Activated CD8-positive, alpha-beta T cell treated with anti-CD3 and anti-CD28 coated beads, Interleukin-2, amount 10 ng/mL, durations not matched to agents 7 days and 5 days (primary cell): ENCODE measurements at regions of chr15 and their contacts with region 1.

Region 1: GRCh38 chr15:75453703-75454470 is 2.4 kb upstream of the SIN3A start:
- DNase-seq: peak; percentile 99
- ATAC-seq: peak; percentile 43
- H3K4me3 Mint-ChIP-seq: peak overlapping the region; percentile 84
- H3K27ac Mint-ChIP-seq: peak overlapping the region; percentile 98
- H3K4me1 Mint-ChIP-seq: peaks cover 26% of the 10 kb centered on the region
- H3K27me3 Mint-ChIP-seq: no peaks in the 10 kb centered on the region

Region 2: DNA sequence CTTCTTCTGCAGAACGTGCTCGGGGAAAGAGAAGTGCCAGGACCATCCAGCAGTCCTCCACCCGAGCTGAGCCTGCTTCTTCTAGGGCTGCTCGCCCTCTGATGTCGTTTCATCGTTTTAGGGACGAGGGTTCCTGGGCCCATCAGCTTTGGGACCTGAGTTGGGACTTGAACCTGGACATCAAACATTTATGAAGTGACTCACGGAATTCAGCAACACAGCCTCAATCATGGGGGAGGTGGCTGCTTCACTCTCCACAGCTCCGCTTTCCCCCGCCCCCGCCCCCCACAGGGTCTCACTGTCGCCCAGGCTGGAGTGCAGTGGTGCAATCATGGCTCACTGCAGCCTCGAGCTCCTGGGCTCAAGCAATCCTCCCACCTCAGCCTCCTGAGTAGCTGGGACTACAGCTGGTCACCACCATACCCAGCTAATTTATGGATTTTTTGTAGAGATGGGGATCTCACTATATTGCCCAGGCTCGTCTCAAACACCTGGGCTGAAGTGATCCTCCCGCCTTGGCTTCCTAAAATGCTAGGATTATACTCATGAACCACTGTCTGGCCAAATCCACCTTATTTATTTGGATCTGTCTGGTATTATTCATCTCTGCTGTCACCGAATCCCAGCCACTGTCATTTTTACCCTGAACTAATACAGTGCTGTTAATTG is 580.0 kb before region 1 on chr15:
- CTCF ChIA-PET with region 1: no interaction called
- POLR2A ChIA-PET with region 1: no interaction called
- DNase-seq: peak; percentile 52
- ATAC-seq: peak; percentile 4
- H3K4me3 Mint-ChIP-seq: peak overlapping the region; percentile 99
- H3K27ac Mint-ChIP-seq: peak overlapping the region; percentile 94
- H3K4me1 Mint-ChIP-seq: peaks cover 37% of the 10 kb centered on the region
- H3K27me3 Mint-ChIP-seq: peaks cover 6% of the 10 kb centered on the region

Region 3: GRCh38 chr15:75367913-75368688 is 85.8 kb before region 1 on chr15 and contains the start of gene MAN2C1:
- CTCF ChIA-PET with region 1: interaction called, 62 read pairs
- POLR2A ChIA-PET with region 1: interaction called, 69 read pairs
- DNase-seq: peak; percentile 94
- ATAC-seq: peak; percentile 94
- H3K4me3 Mint-ChIP-seq: peak within 1 kb of the TSS; percentile 89
- H3K27ac Mint-ChIP-seq: peak within 1 kb of the TSS; percentile 94
- H3K4me1 Mint-ChIP-seq: peaks cover 29% of the 10 kb centered on the region
- H3K27me3 Mint-ChIP-seq: no peaks in the 10 kb centered on the region
- total RNA-seq, gene MAN2C1: 123 to 131 TPM

Region 4: GRCh38 chr15:75508840-75509532 is 55.1 kb after region 1 on chr15:
- CTCF ChIA-PET with region 1: interaction called, 15 read pairs
- POLR2A ChIA-PET with region 1: interaction called, 4 read pairs
- DNase-seq: peak; percentile 47
- ATAC-seq: peak; percentile 42
- H3K4me3 Mint-ChIP-seq: no peak overlapping the region
- H3K27ac Mint-ChIP-seq: peak overlapping the region; percentile 8
- H3K4me1 Mint-ChIP-seq: no peaks in the 10 kb centered on the region
- H3K27me3 Mint-ChIP-seq: no peaks in the 10 kb centered on the region

Region 5: GRCh38 chr15:75597667-75598341 is 143.9 kb after region 1 on chr15:
- CTCF ChIA-PET with region 1: interaction called, 8 read pairs
- POLR2A ChIA-PET with region 1: interaction called, 10 read pairs
- DNase-seq: peak; percentile 80
- ATAC-seq: peak; percentile 86
- H3K4me3 Mint-ChIP-seq: peak overlapping the region; percentile 63
- H3K27ac Mint-ChIP-seq: peak overlapping the region; percentile 93
- H3K4me1 Mint-ChIP-seq: peaks cover 43% of the 10 kb centered on the region
- H3K27me3 Mint-ChIP-seq: no peaks in the 10 kb centered on the region

Region 6: DNA sequence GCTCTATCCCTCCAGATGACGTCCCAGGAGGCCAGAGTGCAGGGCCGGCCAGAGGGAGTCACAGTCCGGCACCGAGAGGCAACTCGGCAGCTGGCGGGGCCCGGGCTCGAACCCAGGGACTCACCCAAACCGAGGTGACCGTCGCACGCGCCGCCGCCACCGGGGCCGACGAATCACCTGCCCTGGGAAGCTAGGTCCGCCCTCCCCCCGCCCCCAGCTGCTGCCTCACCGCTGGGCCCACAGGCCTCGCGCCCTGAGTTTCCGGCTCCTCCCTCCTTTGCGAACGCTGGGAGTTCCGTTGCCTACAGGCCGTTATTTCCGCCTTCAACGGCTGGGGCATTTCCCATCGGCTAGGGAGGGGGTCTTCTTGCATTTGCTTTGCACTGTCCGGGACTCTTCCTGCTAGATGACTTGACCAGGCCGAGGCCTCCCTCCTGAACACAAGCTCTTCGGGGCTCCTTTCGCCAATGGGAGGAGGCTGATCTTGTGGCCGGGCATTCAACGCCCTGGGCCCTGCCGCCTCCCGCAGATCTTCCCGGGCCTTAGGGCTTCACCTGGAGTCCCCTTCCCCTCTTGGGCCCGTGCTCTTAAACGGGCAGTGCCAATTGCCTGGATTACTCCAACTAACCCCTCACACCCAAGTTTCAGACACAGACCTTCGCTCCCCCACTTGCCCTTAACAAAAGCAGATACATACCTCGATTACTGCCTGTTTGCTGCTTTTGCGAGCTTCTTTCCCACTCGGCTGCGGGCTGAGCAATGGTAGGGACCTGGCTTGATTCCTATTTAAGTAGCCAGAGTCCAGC is 171.9 kb after region 1 on chr15 and contains the start of gene SNUPN:
- CTCF ChIA-PET with region 1: interaction called, 11 read pairs
- POLR2A ChIA-PET with region 1: interaction called, 92 read pairs
- DNase-seq: peak; percentile 97
- ATAC-seq: peak; percentile 89
- H3K4me3 Mint-ChIP-seq: peak within 1 kb of the TSS; percentile 97
- H3K27ac Mint-ChIP-seq: peak within 1 kb of the TSS; percentile 99
- H3K4me1 Mint-ChIP-seq: peaks cover 44% of the 10 kb centered on the region
- H3K27me3 Mint-ChIP-seq: no peaks in the 10 kb centered on the region
- total RNA-seq, gene SNUPN: 31.4 to 32.5 TPM

Region 7: DNA sequence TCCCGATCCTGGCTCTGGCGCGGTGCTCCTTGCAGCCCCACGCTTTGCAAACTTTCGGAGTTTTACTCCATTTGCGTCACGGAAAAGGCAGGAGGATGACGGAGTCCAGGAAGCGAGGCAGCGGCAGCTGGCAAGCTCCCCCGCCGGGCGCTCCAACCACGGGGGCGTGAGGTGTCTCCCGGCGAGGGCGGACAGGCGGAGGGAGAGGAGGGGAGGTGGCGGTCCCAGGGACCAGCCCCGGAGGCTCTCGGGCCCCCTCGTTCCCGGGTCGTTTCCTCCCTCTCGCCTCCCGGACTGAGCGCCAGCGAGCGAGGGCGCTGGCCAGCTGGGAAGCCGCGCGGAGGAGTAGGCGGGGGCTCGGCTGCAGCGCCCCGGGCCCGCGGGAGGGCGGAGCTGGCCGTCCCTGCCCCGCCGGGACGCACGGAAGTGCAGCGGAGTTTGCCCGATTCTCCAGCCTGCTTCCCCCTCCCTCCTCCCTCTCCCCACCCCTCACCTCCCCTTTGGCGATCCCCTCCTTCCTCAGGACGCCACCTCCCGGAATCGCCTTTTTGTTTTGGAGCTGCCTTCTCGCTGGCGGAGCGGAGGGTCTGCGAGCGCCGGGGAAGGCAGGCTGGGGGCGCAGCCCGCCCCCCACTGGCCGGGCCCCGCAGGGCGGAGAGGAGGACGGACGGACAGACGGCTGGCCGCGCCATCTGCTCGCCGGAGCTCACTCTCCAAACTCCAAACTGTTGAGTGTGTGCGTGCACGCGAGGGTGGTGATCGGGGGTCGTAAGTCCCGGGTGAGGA is 193.7 kb after region 1 on chr15 and contains the start of gene SNX33:
- CTCF ChIA-PET with region 1: interaction called, 48 read pairs
- POLR2A ChIA-PET with region 1: interaction called, 12 read pairs
- DNase-seq: peak; percentile 63
- ATAC-seq: peak; percentile 77
- H3K4me3 Mint-ChIP-seq: peak within 1 kb of the TSS; percentile 78
- H3K27ac Mint-ChIP-seq: peak within 1 kb of the TSS; percentile 68
- H3K4me1 Mint-ChIP-seq: peaks cover 29% of the 10 kb centered on the region
- H3K27me3 Mint-ChIP-seq: peaks cover 17% of the 10 kb centered on the region
- total RNA-seq, gene SNX33: 0.55 to 0.70 TPM